SK-N-SH (cell line): ENCODE measurements at regions of chr10 and their contacts with region 1.

Region 1: GRCh38 chr10:86349474-86349873 is 17.1 kb downstream of the GRID1 start:
- DNase-seq: peak; percentile 70
- H3K4me3 ChIP-seq: no peak overlapping the region; a peak in 1 of 4 replicates
- H3K27ac ChIP-seq: no peak overlapping the region
- H3K4me1 ChIP-seq: peaks cover 0 to 42% of the 10 kb centered on the region in 2 experiments; a peak in 2 of 4 replicates
- H3K27me3 ChIP-seq: no peaks in the 10 kb centered on the region
- CTCF ChIP-seq: peak; percentile 38
- EP300 ChIP-seq: no peak
- RAD21 ChIP-seq: peak; percentile 66

Region 2: GRCh38 chr10:85786401-85786899 is 563.0 kb before region 1 on chr10:
- CTCF ChIA-PET with region 1: interaction called, 18 read pairs
- POLR2A ChIA-PET with region 1: no interaction called
- DNase-seq: peak; percentile 78
- H3K4me3 ChIP-seq: no peak overlapping the region
- H3K27ac ChIP-seq: no peak overlapping the region
- H3K4me1 ChIP-seq: peaks cover 0 to 10% of the 10 kb centered on the region in 2 experiments; a peak in 1 of 4 replicates
- H3K27me3 ChIP-seq: no peaks in the 10 kb centered on the region
- CTCF ChIP-seq: no peak
- EP300 ChIP-seq: peak in 1 of 2 experiments; percentile 77; a peak in 2 of 4 replicates
- RAD21 ChIP-seq: peak; percentile 73

Region 3: GRCh38 chr10:86211691-86212390 is 137.6 kb before region 1 on chr10:
- CTCF ChIA-PET with region 1: no interaction called
- POLR2A ChIA-PET with region 1: no interaction called
- DNase-seq: no peak
- H3K4me3 ChIP-seq: no peak overlapping the region
- H3K27ac ChIP-seq: no peak overlapping the region
- H3K4me1 ChIP-seq: peaks cover 0 to 10% of the 10 kb centered on the region in 2 experiments; a peak in 2 of 4 replicates
- H3K27me3 ChIP-seq: no peaks in the 10 kb centered on the region
- CTCF ChIP-seq: no peak
- EP300 ChIP-seq: no peak
- RAD21 ChIP-seq: no peak

Region 4: DNA sequence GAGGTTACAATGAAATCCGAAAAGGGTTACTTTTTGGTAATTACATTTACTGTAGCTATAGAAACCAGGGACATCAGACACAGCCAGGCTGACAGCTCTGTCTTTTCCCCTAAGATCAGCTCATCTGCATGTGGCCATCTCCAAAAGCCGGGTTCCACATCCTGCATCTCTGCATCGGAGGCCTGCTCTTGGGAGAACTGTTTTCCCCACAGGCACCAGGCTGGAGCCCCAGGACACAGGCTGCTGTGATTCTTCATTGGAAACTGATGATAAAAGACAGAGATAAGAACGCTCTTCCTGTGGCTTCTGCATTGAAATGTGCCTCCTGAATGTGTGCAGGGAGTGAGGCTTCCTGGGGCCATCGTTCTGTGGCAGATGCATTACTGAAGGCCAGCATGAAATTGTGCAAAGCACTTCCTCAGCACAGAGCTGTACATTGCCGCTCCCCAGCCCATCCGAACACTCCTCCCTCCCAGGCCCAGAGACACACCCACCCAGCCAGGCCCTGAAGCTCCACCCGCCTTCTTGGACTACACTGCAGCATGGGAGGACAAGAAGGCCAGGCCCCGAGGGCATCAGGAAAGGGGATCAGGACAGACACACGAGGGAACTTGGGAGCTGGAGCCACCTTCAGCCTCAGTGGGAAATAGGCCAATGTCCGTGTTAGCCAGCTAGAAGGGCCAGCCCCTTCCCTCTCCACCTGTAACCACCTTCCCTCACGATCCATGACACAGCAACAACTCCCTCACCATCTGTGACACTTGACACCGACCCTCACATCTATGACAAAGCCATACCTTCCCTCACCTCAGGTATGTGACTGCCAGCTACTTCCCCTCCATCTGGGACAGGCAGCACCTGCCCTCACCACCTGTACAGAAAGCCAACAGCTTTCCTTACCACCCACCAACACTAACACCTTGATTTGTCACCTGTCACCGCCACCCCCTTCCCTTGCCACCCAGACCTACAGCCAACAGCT is 96.1 kb before region 1 on chr10:
- CTCF ChIA-PET with region 1: interaction called, 29 read pairs
- POLR2A ChIA-PET with region 1: interaction called, 3 read pairs
- DNase-seq: peak; percentile 85
- H3K4me3 ChIP-seq: no peak overlapping the region
- H3K27ac ChIP-seq: peak overlapping the region in 1 of 2 experiments; percentile 86; a peak in 2 of 4 replicates
- H3K4me1 ChIP-seq: peaks cover 0 to 50% of the 10 kb centered on the region in 2 experiments; a peak in 2 of 4 replicates
- H3K27me3 ChIP-seq: no peaks in the 10 kb centered on the region
- CTCF ChIP-seq: no peak
- EP300 ChIP-seq: peak in 1 of 2 experiments; percentile 68; a peak in 1 of 4 replicates
- RAD21 ChIP-seq: 0 out of 2 replicates have a peak, but pooled peaks have one; percentile 7

Region 5: DNA sequence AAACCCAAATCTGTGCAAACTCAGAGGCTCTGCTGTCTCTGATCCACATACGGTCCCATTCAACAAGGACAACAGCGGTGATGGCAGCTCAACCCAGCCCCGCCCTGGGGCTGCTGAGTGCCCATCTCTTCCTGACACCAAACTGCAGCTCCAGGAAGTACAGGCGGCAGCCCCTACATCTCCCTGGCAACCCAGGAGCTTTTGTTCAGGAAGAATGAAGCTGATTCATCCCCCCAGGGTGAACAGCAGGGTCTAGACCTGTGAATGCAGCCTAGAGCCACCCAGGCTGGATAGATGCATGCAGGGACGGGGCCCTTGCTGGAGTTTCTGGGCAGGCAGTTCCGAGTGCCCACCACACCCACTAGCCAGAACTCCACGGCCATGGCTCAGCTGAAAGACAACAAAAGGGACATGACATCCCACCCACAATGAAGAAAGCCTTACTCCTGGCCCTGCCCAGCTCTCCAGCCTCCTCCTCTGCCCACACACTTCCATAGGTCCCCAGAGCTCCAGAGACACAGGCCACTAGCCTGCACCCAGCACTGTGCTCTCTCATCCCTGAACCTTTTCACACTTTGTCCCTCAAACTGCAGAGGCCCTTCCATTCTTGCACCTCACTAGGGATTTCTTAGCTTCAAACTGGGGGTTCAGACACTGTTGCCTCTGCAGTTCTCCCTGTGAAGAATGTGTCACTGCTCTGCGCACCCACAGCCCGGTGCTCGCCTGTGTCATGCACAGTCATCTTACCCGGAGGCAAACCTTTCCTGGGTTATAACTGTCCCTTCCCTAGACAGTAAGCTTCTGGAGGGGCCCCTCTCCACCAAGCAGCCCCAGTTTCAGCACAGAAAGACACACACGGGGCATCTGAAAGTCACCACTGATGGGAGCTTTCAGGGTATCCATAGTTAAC is 81.9 kb before region 1 on chr10:
- CTCF ChIA-PET with region 1: interaction called, 32 read pairs
- POLR2A ChIA-PET with region 1: interaction called, 4 read pairs
- DNase-seq: peak; percentile 16
- H3K4me3 ChIP-seq: no peak overlapping the region
- H3K27ac ChIP-seq: no peak overlapping the region
- H3K4me1 ChIP-seq: peaks cover 0 to 27% of the 10 kb centered on the region in 2 experiments; a peak in 1 of 4 replicates
- H3K27me3 ChIP-seq: no peaks in the 10 kb centered on the region
- CTCF ChIP-seq: no peak
- EP300 ChIP-seq: no peak
- RAD21 ChIP-seq: no peak

Region 6: GRCh38 chr10:86366033-86366901 is 16.8 kb after region 1 on chr10 and contains the start of gene GRID1:
- CTCF ChIA-PET with region 1: interaction called, 191 read pairs
- POLR2A ChIA-PET with region 1: interaction called, 7 read pairs
- DNase-seq: peak; percentile 98
- H3K4me3 ChIP-seq: peak within 1 kb of the TSS; percentile 49 to 51; a peak in 3 of 4 replicates
- H3K27ac ChIP-seq: no peak within 1 kb of the TSS
- H3K4me1 ChIP-seq: peaks cover 0 to 15% of the 10 kb centered on the region in 2 experiments; a peak in 1 of 4 replicates
- H3K27me3 ChIP-seq: peaks cover 28% of the 10 kb centered on the region
- CTCF ChIP-seq: no peak
- EP300 ChIP-seq: no peak
- RAD21 ChIP-seq: no peak
- polyA plus RNA-seq, gene GRID1: 0.13 and 0.24 TPM in 2 replicates

Region 7: DNA sequence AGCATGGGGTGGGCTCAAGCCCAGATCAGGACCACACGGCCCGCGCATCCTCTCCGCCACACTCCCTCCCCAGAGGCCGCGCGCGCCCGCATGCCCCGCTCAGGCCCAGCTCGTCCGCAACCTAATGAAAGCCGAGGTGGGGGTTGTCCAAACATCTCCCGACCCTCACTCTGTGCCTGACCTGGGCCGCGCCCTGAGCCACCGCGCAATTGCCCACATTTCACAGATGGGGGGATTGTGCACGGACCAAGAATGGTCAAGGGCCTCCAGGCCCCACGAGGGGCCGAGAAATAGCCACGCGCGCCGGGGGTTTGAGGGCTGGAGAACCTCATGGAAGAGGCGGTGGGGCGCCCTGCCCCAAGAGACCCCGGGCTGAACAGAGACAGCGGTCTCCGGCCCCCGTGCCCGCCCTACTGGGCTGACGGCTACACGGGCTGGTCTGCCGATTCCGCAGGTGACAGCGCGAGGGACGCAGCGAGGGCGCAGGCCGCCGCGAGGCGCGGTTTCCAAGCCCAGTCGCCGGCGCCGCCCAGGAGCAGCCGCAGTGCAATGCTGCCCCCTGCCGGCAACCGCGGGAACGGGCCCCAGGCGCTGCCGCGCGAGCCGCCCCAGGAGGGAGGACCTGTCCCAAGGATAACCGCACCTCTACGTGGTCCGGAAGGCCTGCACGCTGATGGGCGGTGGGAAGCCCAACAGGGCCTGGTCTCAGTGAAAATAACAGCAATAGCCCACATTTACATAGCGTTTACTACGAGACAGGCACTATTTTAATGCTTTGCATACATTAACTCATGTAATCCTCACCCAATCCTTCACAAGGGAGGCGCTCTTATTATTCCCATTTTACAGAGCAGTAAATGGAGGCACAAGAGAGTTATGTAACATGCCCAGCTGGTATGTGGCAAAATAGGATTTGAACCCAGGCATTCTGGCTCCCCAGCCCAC is 27.6 kb after region 1 on chr10:
- CTCF ChIA-PET with region 1: interaction called, 38 read pairs
- POLR2A ChIA-PET with region 1: no interaction called
- DNase-seq: peak; percentile 94
- H3K4me3 ChIP-seq: peak overlapping the region in 1 of 2 experiments; percentile 37; a peak in 2 of 4 replicates
- H3K27ac ChIP-seq: no peak overlapping the region
- H3K4me1 ChIP-seq: no peaks in the 10 kb centered on the region; a peak in 1 of 4 replicates
- H3K27me3 ChIP-seq: peaks cover 14% of the 10 kb centered on the region
- CTCF ChIP-seq: peak; percentile 93
- EP300 ChIP-seq: no peak
- RAD21 ChIP-seq: peak; percentile 94